Activated CD4-positive, alpha-beta memory T cell treated with anti-CD3 and anti-CD28 coated beads for 36 hours (primary cell): ENCODE measurements at regions of chr2 and their contacts with region 1.

Region 1: DNA sequence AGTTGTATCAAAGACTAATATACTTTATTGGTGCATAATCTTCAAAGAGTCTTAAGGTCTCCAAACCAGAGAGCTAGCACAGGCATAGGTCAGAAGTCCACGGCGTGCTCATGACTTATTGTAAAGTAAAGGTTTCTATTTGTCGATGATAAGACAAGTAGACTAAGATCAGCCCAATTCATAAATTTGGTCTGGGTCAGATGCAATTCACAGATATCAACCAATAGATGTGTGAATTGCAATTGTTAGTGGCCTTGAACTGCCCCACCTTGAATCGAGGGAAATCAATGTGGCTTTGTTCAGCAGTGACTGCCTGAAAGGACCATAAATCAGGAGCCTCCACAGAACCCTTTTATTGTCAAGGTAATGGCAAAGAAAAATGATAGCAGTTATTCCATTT is 39.1 kb upstream of the CPS1 start:
- DNase-seq: no peak
- H3K4me3 Mint-ChIP-seq: no peak overlapping the region
- H3K27ac Mint-ChIP-seq: no peak overlapping the region
- H3K4me1 Mint-ChIP-seq: peaks cover 3% of the 10 kb centered on the region
- H3K27me3 Mint-ChIP-seq: peaks cover 21% of the 10 kb centered on the region

Region 2: DNA sequence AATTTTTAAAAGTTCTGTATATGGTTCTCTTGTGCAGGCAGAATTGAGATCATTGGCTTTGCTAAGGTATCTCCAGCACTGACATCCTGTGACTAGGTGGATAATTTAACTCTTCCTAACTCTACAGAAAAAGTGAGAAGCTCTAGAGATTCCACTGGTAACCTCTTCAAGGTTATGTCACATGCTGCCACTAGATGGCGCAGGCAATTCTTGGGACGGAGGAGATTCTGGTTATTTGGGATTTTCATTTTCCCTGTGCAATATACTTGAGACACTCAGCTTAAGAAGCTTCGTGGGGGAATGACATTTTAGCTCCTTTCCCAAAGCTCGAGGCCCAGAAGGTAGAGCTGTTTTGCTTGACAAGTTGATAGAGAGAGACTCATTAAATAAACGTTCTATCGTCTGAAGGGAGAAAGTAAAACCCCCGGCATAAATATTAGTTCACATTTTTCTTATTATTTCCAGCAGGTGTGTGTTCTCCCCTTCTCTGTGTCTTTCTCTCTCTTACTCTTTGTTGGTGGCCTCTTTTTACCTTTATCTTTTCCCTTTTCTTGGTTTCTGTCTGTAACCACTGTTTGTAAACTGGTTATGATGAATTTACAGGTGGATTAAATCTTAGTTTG is 14.1 kb before region 1 on chr2:
- CTCF ChIA-PET with region 1: interaction called, 10 read pairs
- POLR2A ChIA-PET with region 1: no interaction called
- intact Hi-C with region 1: no loop called
- DNase-seq: peak; percentile 38
- H3K4me3 Mint-ChIP-seq: no peak overlapping the region
- H3K27ac Mint-ChIP-seq: no peak overlapping the region
- H3K4me1 Mint-ChIP-seq: peaks cover 8% of the 10 kb centered on the region
- H3K27me3 Mint-ChIP-seq: peaks cover 30% of the 10 kb centered on the region